Activated CD4-positive, alpha-beta T cell treated with anti-CD3 and anti-CD28 coated beads, Interleukin-2, amount 10 ng/mL, durations not matched to agents 24 days and 14 days (primary cell): ENCODE measurements at regions of chr5 and their contacts with region 1.

Region 1: GRCh38 chr5:100623719-100624118 is 88.5 kb downstream of the FAM174A start:
- DNase-seq: no peak
- H3K4me3 Mint-ChIP-seq: no peak overlapping the region
- H3K27ac Mint-ChIP-seq: no peak overlapping the region
- H3K4me1 Mint-ChIP-seq: no peaks in the 10 kb centered on the region
- H3K27me3 Mint-ChIP-seq: peaks cover 2% of the 10 kb centered on the region

Region 2: GRCh38 chr5:101045689-101046088 is 422.0 kb after region 1 on chr5:
- intact Hi-C with region 1: loop called (anchors 1 kb)
- DNase-seq: no peak
- H3K4me3 Mint-ChIP-seq: no peak overlapping the region
- H3K27ac Mint-ChIP-seq: no peak overlapping the region
- H3K4me1 Mint-ChIP-seq: no peaks in the 10 kb centered on the region
- H3K27me3 Mint-ChIP-seq: no peaks in the 10 kb centered on the region

Region 3: GRCh38 chr5:101390151-101390908 is 766.6 kb after region 1 on chr5:
- intact Hi-C with region 1: loop called (anchors 10 kb)
- DNase-seq: peak; percentile 58
- H3K4me3 Mint-ChIP-seq: no peak overlapping the region
- H3K27ac Mint-ChIP-seq: no peak overlapping the region
- H3K4me1 Mint-ChIP-seq: no peaks in the 10 kb centered on the region
- H3K27me3 Mint-ChIP-seq: no peaks in the 10 kb centered on the region